Transverse colon (tissue), 4 donors: ENCODE measurements at regions of chr14 and their contacts with region 1.

Region 1: GRCh38 chr14:32896979-32897697 is 41.5 kb upstream of the NPAS3 start:
- DNase-seq: no peak
- H3K4me3 ChIP-seq: peak overlapping the region; percentile 16 to 56 (median 34)
- H3K27ac ChIP-seq: peak overlapping the region; percentile 52 to 80 (median 68)
- H3K4me1 ChIP-seq: peaks cover 0 to 10% (median 0%) of the 10 kb centered on the region in 4 donors
- H3K27me3 ChIP-seq: no peaks in the 10 kb centered on the region
- CTCF ChIP-seq: no peak
- EP300 ChIP-seq: no peak
- POLR2A ChIP-seq: no peak

Region 2: GRCh38 chr14:32813401-32813800 is 83.7 kb before region 1 on chr14:
- in situ Hi-C with region 1: no loop called
- intact Hi-C with region 1: loop called (anchors 5 kb)
- DNase-seq: no peak
- H3K4me3 ChIP-seq: no peak overlapping the region
- H3K27ac ChIP-seq: no peak overlapping the region
- H3K4me1 ChIP-seq: peaks cover 0 to 12% (median 6%) of the 10 kb centered on the region in 4 donors
- H3K27me3 ChIP-seq: no peaks in the 10 kb centered on the region
- CTCF ChIP-seq: no peak
- EP300 ChIP-seq: no peak
- POLR2A ChIP-seq: no peak